Lower leg skin (tissue), 4 donors: ENCODE measurements at regions of chr13 and their contacts with region 1.

Region 1: GRCh38 chr13:57653229-57653989 is 21.9 kb downstream of the PCDH17 start:
- DNase-seq: no peak
- H3K4me3 ChIP-seq: no peak overlapping the region
- CTCF ChIP-seq: no peak
- POLR2A ChIP-seq: no peak

Region 2: GRCh38 chr13:57424379-57424778 is 229.0 kb before region 1 on chr13:
- intact Hi-C with region 1: no loop called
- DNase-seq: no peak
- H3K4me3 ChIP-seq: no peak overlapping the region
- CTCF ChIP-seq: no peak
- POLR2A ChIP-seq: no peak

Region 3: DNA sequence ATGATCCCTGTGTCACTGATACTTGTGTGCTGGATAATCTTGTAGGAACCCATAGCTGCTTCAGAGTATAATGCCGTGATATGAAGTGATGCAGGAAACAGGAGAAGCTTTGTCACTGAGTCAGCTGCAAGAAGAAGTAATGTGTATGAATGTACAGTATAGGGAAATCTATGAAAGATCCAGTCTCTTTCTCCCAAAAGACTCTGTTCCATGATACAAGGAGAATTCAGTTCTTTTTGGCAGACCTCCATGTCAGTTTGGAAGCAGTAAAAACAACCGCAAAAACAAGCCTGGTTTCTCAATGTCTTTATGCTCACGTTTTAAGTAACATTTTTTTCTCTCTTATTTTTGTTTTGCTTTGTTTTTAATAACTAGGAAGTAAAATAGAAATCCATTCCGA is 12.1 kb after region 1 on chr13:
- intact Hi-C with region 1: loop called (anchors 1 kb)
- DNase-seq: no peak
- H3K4me3 ChIP-seq: no peak overlapping the region
- CTCF ChIP-seq: no peak
- POLR2A ChIP-seq: no peak

Region 4: GRCh38 chr13:59312776-59313175 is 1659.4 kb after region 1 on chr13:
- intact Hi-C with region 1: no loop called
- DNase-seq: no peak
- H3K4me3 ChIP-seq: no peak overlapping the region
- CTCF ChIP-seq: no peak
- POLR2A ChIP-seq: no peak